ENCODE measurements at regions of chr18 and their contacts with region 1.

Region 1: DNA sequence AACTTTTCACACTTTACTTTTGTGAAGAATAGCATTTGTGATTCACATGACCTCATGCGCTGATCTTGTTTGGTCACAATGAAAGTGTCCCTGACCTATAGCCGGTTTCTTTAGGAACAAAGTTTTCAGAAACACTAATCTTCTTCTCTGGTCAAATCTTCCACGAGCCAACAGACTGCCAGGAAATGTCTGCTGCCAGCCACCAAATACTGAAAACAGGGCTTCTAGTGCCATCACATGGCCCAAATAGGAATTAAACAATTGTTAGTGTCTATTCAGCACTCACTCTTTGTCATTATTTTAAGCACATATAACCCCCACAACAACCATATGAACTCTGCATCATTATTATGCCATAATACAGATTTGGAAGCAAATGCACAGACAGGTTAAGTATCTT is 286.5 kb upstream of the SYT4 start:
- DNase-seq: peak; percentile 48
- H3K4me3 ChIP-seq: no peak overlapping the region
- H3K27ac ChIP-seq: no peak overlapping the region
- H3K4me1 ChIP-seq: no peaks in the 10 kb centered on the region
- H3K27me3 ChIP-seq: no peaks in the 10 kb centered on the region
- CTCF ChIP-seq: no peak
- POLR2A ChIP-seq: no peak

Region 2: GRCh38 chr18:43271593-43272432 is 292.0 kb before region 1 on chr18:
- CTCF ChIA-PET with region 1: no interaction called
- POLR2A ChIA-PET with region 1: no interaction called
- dilution Hi-C with region 1: no loop called
- intact Hi-C with region 1: loop called (anchors 10 kb)
- DNase-seq: peak; percentile 63
- H3K4me3 ChIP-seq: no peak overlapping the region
- H3K27ac ChIP-seq: no peak overlapping the region
- H3K4me1 ChIP-seq: no peaks in the 10 kb centered on the region
- H3K27me3 ChIP-seq: no peaks in the 10 kb centered on the region
- CTCF ChIP-seq: peak; percentile 32 to 42
- POLR2A ChIP-seq: no peak

Measured in endothelial cell of umbilical vein (primary cell).